T-cell (primary cell): ENCODE measurements at regions of chr6 and their contacts with region 1.

Region 1: GRCh38 chr6:111692327-111693164 is 86.9 kb upstream of the TRAF3IP2 start:
- DNase-seq: peak in 1 of 35 experiments; percentile 30
- ATAC-seq: peak in 3 of 4 experiments; percentile 42 to 65 (median 53)
- H3K4me3 ChIP-seq: no peak overlapping the region
- H3K4me3 Mint-ChIP-seq: peak overlapping the region in 1 of 3 donors; percentile 39
- H3K27ac ChIP-seq: peak overlapping the region; percentile 25
- H3K27ac Mint-ChIP-seq: peak overlapping the region; percentile 81 to 90
- H3K4me1 ChIP-seq: peaks cover 5 to 26% of the 10 kb centered on the region in 2 experiments
- H3K4me1 Mint-ChIP-seq: peaks cover 65 to 81% (median 80%) of the 10 kb centered on the region in 3 donors
- H3K27me3 ChIP-seq: no peaks in the 10 kb centered on the region
- H3K27me3 Mint-ChIP-seq: no peaks in the 10 kb centered on the region

Region 2: GRCh38 chr6:111660537-111660936 is 32.0 kb before region 1 on chr6:
- CTCF ChIA-PET with region 1: no interaction called
- POLR2A ChIA-PET with region 1: no interaction called
- DNase-seq: no peak
- ATAC-seq: no peak
- H3K4me3 ChIP-seq: no peak overlapping the region
- H3K4me3 Mint-ChIP-seq: no peak overlapping the region
- H3K27ac ChIP-seq: no peak overlapping the region
- H3K27ac Mint-ChIP-seq: no peak overlapping the region
- H3K4me1 ChIP-seq: no peaks in the 10 kb centered on the region
- H3K4me1 Mint-ChIP-seq: peaks cover 0 to 10% (median 0%) of the 10 kb centered on the region in 3 donors
- H3K27me3 ChIP-seq: no peaks in the 10 kb centered on the region
- H3K27me3 Mint-ChIP-seq: no peaks in the 10 kb centered on the region

Region 3: GRCh38 chr6:111743862-111744692 is 51.5 kb after region 1 on chr6:
- CTCF ChIA-PET with region 1: no interaction called
- POLR2A ChIA-PET with region 1: interaction called in 1 of 2 experiments, 11 read pairs
- DNase-seq: no peak
- ATAC-seq: no peak
- H3K4me3 ChIP-seq: no peak overlapping the region
- H3K4me3 Mint-ChIP-seq: no peak overlapping the region
- H3K27ac ChIP-seq: no peak overlapping the region
- H3K27ac Mint-ChIP-seq: peak overlapping the region; percentile 55 to 63
- H3K4me1 ChIP-seq: peaks cover 43 to 76% of the 10 kb centered on the region in 2 experiments
- H3K4me1 Mint-ChIP-seq: peaks cover 94 to 96% (median 95%) of the 10 kb centered on the region in 3 donors
- H3K27me3 ChIP-seq: no peaks in the 10 kb centered on the region
- H3K27me3 Mint-ChIP-seq: no peaks in the 10 kb centered on the region

Region 4: DNA sequence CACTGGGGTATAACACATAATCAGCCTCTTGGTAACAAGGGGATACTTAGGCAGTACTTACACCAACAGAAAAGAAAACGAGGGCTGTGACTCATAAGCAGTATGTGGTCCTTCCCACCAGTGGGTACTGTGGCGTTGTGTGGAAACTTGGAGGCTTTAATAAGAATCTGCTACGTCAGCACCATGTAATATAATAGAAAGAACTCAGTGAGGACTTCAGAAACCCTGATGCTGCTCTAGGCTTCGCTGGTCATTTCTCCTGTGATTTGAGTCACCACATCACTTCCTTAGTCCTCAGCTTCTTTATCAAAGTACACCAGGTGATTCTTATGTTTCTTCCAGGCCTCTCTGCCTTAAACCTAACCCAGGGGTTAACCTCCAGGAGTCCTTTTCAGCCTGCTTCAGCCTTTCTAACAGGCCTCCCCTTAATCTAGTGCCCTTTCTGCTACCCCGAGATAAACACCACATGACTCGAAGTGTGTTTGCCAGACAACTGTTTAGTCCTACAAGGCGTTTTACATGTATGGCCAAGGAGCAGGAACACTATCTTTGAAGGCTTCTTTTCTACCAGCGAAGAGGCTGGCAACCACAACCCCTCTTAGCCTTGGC is 112.2 kb after region 1 on chr6:
- CTCF ChIA-PET with region 1: no interaction called
- POLR2A ChIA-PET with region 1: no interaction called
- DNase-seq: peak in 34 of 35 experiments; percentile 36 to 86 (median 63)
- ATAC-seq: peak; percentile 73 to 83 (median 80)
- H3K4me3 ChIP-seq: no peak overlapping the region
- H3K4me3 Mint-ChIP-seq: peak overlapping the region; percentile 38 to 62 (median 58)
- H3K27ac ChIP-seq: peak overlapping the region; percentile 81
- H3K27ac Mint-ChIP-seq: peak overlapping the region; percentile 89 to 95
- H3K4me1 ChIP-seq: peaks cover 33 to 68% of the 10 kb centered on the region in 2 experiments
- H3K4me1 Mint-ChIP-seq: peaks cover 92 to 99% (median 97%) of the 10 kb centered on the region in 3 donors
- H3K27me3 ChIP-seq: no peaks in the 10 kb centered on the region
- H3K27me3 Mint-ChIP-seq: no peaks in the 10 kb centered on the region

Region 5: GRCh38 chr6:111950661-111951496 is 258.3 kb after region 1 on chr6:
- CTCF ChIA-PET with region 1: no interaction called
- POLR2A ChIA-PET with region 1: no interaction called
- DNase-seq: no peak
- ATAC-seq: no peak
- H3K4me3 ChIP-seq: no peak overlapping the region
- H3K4me3 Mint-ChIP-seq: no peak overlapping the region
- H3K27ac ChIP-seq: no peak overlapping the region
- H3K27ac Mint-ChIP-seq: no peak overlapping the region
- H3K4me1 ChIP-seq: no peaks in the 10 kb centered on the region
- H3K4me1 Mint-ChIP-seq: peaks cover 4 to 13% (median 12%) of the 10 kb centered on the region in 3 donors
- H3K27me3 ChIP-seq: peaks cover 0 to 5% of the 10 kb centered on the region in 2 experiments
- H3K27me3 Mint-ChIP-seq: no peaks in the 10 kb centered on the region

Region 6: DNA sequence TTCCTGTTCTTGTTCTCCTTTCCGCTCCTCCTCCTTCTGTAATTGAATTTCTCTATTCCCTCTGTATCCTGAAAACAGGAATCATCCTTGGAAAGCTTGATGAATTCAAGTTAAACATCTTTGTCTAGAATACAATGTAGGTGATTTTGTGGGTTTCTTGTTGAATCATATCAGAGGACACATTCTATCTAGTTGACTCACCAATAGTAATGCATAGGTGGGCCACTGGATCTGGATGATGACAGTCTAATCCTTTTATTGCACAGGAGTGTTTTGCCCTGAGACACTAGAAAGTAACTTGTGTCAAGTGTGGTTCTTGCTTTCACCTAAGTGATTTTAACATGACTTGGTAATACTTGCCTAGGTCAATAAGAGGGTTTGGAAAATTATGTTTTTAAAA is 818.9 kb after region 1 on chr6:
- CTCF ChIA-PET with region 1: no interaction called
- POLR2A ChIA-PET with region 1: no interaction called
- DNase-seq: no peak
- ATAC-seq: no peak
- H3K4me3 ChIP-seq: no peak overlapping the region
- H3K4me3 Mint-ChIP-seq: no peak overlapping the region
- H3K27ac ChIP-seq: no peak overlapping the region
- H3K27ac Mint-ChIP-seq: no peak overlapping the region
- H3K4me1 ChIP-seq: no peaks in the 10 kb centered on the region
- H3K4me1 Mint-ChIP-seq: no peaks in the 10 kb centered on the region
- H3K27me3 ChIP-seq: no peaks in the 10 kb centered on the region
- H3K27me3 Mint-ChIP-seq: peaks cover 0 to 5% of the 10 kb centered on the region in 2 donors